ENCODE measurements at regions of chr15 and their contacts with region 1.

Region 1: DNA sequence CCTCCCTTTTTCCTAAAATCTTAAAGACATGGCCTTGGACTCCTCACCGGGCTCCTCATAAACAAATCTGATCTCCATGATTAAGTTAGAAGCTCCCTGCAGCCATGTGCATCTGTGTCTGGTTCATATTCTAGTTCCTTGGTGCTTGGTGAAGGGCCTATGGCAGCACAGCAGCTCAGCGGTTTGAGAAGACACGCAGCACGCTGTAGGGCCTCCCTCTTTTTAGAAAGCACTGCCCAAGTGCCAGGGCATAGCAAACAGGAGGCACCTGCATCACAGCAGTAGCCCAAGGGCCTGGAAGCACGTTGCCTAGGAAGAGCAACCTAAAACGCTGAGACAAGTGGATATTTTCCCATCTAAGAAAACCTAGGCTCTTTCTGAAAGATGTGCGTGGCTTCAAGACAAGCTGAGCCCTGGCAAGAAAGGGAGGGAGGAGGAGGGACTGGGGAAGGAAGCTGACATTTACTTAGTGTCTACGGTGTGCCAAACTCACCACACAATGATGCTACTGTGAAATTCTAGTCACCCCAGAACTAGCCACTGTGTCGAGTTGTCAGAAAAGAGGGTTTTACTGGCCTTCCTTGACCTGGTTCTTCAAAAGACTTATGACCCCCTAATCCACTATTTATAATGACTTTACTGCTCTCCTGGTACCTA is 14.9 kb upstream of the ULK3 start:
- DNase-seq: no peak
- H3K4me3 ChIP-seq: no peak overlapping the region
- H3K27me3 ChIP-seq: no peaks in the 10 kb centered on the region
- CTCF ChIP-seq: no peak

Region 2: DNA sequence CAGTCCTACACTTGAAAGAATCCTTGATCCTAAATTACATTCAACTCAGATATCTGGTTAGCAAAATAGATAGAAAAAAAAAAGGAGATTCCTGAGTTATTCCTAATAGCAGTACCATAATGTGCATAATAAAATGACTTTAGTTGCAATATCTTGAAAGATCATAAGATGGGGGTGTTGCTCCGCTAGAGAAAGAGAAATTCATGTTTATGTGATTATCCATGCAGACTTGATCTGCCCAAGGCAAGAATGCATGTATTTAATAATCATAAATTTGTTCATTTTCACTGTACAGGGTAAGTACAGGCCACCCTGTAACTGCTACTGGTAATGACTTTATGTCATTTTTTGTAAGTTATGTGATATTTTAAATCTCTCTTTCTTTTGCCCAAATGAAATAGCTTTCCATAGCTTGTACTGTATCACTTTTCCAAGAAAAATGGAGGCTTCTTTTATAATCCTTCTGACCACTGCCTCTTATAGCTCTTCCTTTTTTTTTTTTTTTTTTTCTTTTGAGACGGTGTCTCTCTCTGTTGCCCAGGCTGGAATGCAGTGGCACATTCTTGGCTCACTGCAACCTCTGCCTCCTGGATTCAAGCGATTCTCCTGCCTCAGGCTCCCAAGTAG is 1573.6 kb before region 1 on chr15:
- CTCF ChIA-PET with region 1: no interaction called
- POLR2A ChIA-PET with region 1: interaction called, 11 read pairs
- DNase-seq: no peak
- H3K4me3 ChIP-seq: no peak overlapping the region
- H3K27me3 ChIP-seq: no peaks in the 10 kb centered on the region
- CTCF ChIP-seq: peak; percentile 31; the same call in 1 of the 2 replicates

Region 3: DNA sequence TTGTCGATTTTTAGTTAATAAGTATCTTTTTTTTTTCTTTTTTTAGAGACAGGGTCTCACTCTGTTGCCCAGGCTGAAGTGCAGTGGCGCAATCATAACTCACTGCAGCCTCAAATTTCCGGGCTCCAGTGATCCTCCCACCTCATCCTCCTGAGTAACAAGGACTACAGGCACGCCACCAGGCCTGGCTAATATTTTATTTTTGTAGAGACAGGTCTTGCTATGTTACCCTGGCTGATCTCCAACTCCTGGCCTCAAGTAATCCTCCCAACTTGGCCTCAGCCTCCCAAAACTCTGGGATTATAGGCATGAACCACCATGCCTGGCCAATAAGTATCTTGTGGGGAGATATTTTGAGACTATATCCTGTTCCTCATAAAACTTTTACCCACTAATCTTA is 346.3 kb before region 1 on chr15:
- CTCF ChIA-PET with region 1: no interaction called
- POLR2A ChIA-PET with region 1: no interaction called
- DNase-seq: no peak
- H3K4me3 ChIP-seq: no peak overlapping the region
- H3K27me3 ChIP-seq: no peaks in the 10 kb centered on the region
- CTCF ChIP-seq: no peak

Region 4: GRCh38 chr15:74869726-74870407 is 12.0 kb after region 1 on chr15:
- CTCF ChIA-PET with region 1: interaction called, 10 read pairs
- POLR2A ChIA-PET with region 1: interaction called, 3 read pairs
- DNase-seq: no peak
- H3K4me3 ChIP-seq: no peak overlapping the region
- H3K27me3 ChIP-seq: no peaks in the 10 kb centered on the region
- CTCF ChIP-seq: no peak

Measured in BJ (cell line).